Natural killer cell (primary cell): ENCODE measurements at regions of chr3 and their contacts with region 1.

Region 1: GRCh38 chr3:44477312-44478030 is at the start of gene ZNF445:
- DNase-seq: peak; percentile 73 to 88
- ATAC-seq: peak; percentile 91 to 95 (median 91)
- H3K4me3 ChIP-seq: peak within 1 kb of the TSS; percentile 78
- H3K4me3 Mint-ChIP-seq: peak within 1 kb of the TSS; percentile 96
- H3K27ac ChIP-seq: peak within 1 kb of the TSS; percentile 52
- H3K27ac Mint-ChIP-seq: peak within 1 kb of the TSS; percentile 83 to 92
- H3K4me1 ChIP-seq: peaks cover 11% of the 10 kb centered on the region
- H3K4me1 Mint-ChIP-seq: peaks cover 22 to 41% of the 10 kb centered on the region in 2 donors
- H3K27me3 ChIP-seq: no peaks in the 10 kb centered on the region
- H3K27me3 Mint-ChIP-seq: no peaks in the 10 kb centered on the region
- CTCF ChIP-seq: no peak
- total RNA-seq, gene ZNF445: 15.5 to 24.4 (median 17.4) TPM

Region 2: GRCh38 chr3:44338010-44338827 is 139.3 kb before region 1 on chr3 and contains the start of gene TCAIM:
- intact Hi-C with region 1: loop called (anchors 10 kb)
- DNase-seq: peak; percentile 98 to 100
- ATAC-seq: peak; percentile 92 to 98 (median 93)
- H3K4me3 ChIP-seq: peak within 1 kb of the TSS; percentile 81
- H3K4me3 Mint-ChIP-seq: peak within 1 kb of the TSS; percentile 96
- H3K27ac ChIP-seq: peak within 1 kb of the TSS; percentile 87
- H3K27ac Mint-ChIP-seq: peak within 1 kb of the TSS; percentile 95 to 96
- H3K4me1 ChIP-seq: peaks cover 13% of the 10 kb centered on the region
- H3K4me1 Mint-ChIP-seq: peaks cover 25 to 32% of the 10 kb centered on the region in 2 donors
- H3K27me3 ChIP-seq: no peaks in the 10 kb centered on the region
- H3K27me3 Mint-ChIP-seq: peaks cover 6 to 9% of the 10 kb centered on the region in 2 donors
- CTCF ChIP-seq: no peak
- total RNA-seq, gene TCAIM: 10.9 to 11.2 (median 11.0) TPM

Region 3: GRCh38 chr3:44375450-44375849 is 102.0 kb before region 1 on chr3:
- intact Hi-C with region 1: no loop called
- DNase-seq: no peak
- ATAC-seq: no peak
- H3K4me3 ChIP-seq: no peak overlapping the region
- H3K4me3 Mint-ChIP-seq: no peak overlapping the region
- H3K27ac ChIP-seq: no peak overlapping the region
- H3K27ac Mint-ChIP-seq: no peak overlapping the region
- H3K4me1 ChIP-seq: no peaks in the 10 kb centered on the region
- H3K4me1 Mint-ChIP-seq: no peaks in the 10 kb centered on the region
- H3K27me3 ChIP-seq: no peaks in the 10 kb centered on the region
- H3K27me3 Mint-ChIP-seq: no peaks in the 10 kb centered on the region
- CTCF ChIP-seq: no peak

Region 4: GRCh38 chr3:44418549-44418948 is 58.9 kb before region 1 on chr3:
- intact Hi-C with region 1: no loop called
- DNase-seq: no peak
- ATAC-seq: no peak
- H3K4me3 ChIP-seq: no peak overlapping the region
- H3K4me3 Mint-ChIP-seq: no peak overlapping the region
- H3K27ac ChIP-seq: no peak overlapping the region
- H3K27ac Mint-ChIP-seq: no peak overlapping the region
- H3K4me1 ChIP-seq: no peaks in the 10 kb centered on the region
- H3K4me1 Mint-ChIP-seq: peaks cover 0 to 7% of the 10 kb centered on the region in 2 donors
- H3K27me3 ChIP-seq: no peaks in the 10 kb centered on the region
- H3K27me3 Mint-ChIP-seq: no peaks in the 10 kb centered on the region
- CTCF ChIP-seq: no peak

Region 5: DNA sequence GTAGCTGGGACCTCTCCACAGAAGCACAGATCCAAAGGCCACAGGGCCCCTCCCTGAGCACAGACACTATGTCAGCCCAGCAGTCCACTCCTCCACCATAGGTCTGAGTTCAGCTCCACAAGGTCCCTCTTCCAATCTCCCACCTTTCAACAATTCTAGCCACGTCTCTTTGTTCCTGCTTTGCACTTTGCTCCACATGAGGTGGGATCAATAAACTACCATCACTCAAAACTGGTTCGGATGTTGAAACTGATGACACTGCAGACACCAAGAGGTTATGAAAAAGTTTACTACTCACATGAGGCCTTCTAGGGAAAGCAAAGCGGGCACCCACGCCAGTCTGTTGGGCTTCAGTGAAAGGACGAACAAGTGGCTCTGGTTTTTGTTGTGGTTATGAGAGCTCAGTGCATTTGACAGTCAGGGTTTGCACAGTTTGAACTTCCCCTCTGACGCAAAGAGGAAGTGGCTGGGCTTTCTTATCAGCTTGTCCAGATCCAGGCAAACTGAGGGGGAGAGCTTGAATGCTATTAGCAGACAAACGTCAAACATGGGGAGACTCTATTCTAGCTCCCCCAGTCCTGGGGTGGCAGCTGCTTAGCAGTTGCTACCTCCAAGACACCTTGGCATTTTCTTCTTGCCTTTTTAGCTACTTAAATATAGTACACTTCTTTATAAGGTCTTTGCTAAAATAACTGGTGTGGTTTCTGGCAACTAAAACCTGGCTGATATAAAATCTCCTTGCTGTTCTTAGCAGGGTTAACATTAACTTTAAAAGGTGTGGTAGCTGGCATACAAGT is 37.8 kb before region 1 on chr3:
- intact Hi-C with region 1: loop called (anchors 1 kb)
- DNase-seq: peak; percentile 64 to 86
- ATAC-seq: peak; percentile 81 to 92 (median 90)
- H3K4me3 ChIP-seq: no peak overlapping the region
- H3K4me3 Mint-ChIP-seq: peak overlapping the region; percentile 86
- H3K27ac ChIP-seq: peak overlapping the region; percentile 93
- H3K27ac Mint-ChIP-seq: peak overlapping the region; percentile 93 to 100
- H3K4me1 ChIP-seq: peaks cover 24% of the 10 kb centered on the region
- H3K4me1 Mint-ChIP-seq: peaks cover 32 to 33% of the 10 kb centered on the region in 2 donors
- H3K27me3 ChIP-seq: no peaks in the 10 kb centered on the region
- H3K27me3 Mint-ChIP-seq: no peaks in the 10 kb centered on the region
- CTCF ChIP-seq: no peak

Region 6: DNA sequence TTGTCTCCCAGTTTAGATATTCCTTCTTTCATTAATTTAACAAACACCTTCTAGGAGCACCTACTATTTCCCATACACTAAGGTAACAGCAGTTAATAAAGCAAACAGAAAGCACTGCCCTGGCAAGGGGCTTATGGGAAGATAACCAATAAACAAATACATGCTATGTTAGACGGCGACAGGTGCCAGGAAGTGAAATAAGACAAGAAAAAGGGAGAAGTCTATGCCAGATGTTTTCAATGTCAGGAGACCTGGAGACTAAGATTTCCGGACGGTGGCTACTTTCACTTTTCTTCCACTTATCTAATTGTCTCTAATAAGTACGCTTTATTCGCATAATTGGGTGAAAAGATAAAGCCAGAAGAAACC is 32.5 kb after region 1 on chr3:
- intact Hi-C with region 1: loop called (anchors 1 kb)
- DNase-seq: peak in 1 of 2 donors; percentile 56
- ATAC-seq: peak in 2 of 3 donors; percentile 7 to 10
- H3K4me3 ChIP-seq: peak overlapping the region; percentile 94
- H3K4me3 Mint-ChIP-seq: peak overlapping the region; percentile 93
- H3K27ac ChIP-seq: peak overlapping the region; percentile 75
- H3K27ac Mint-ChIP-seq: peak overlapping the region; percentile 87 to 94
- H3K4me1 ChIP-seq: peaks cover 19% of the 10 kb centered on the region
- H3K4me1 Mint-ChIP-seq: peaks cover 35 to 38% of the 10 kb centered on the region in 2 donors
- H3K27me3 ChIP-seq: no peaks in the 10 kb centered on the region
- H3K27me3 Mint-ChIP-seq: no peaks in the 10 kb centered on the region
- CTCF ChIP-seq: no peak